Activated CD8-positive, alpha-beta T cell treated with anti-CD3 and anti-CD28 coated beads, Interleukin-2, amount 10 ng/mL, durations not matched to agents 7 days and 5 days (primary cell): ENCODE measurements at regions of chr9 and their contacts with region 1.

Region 1: DNA sequence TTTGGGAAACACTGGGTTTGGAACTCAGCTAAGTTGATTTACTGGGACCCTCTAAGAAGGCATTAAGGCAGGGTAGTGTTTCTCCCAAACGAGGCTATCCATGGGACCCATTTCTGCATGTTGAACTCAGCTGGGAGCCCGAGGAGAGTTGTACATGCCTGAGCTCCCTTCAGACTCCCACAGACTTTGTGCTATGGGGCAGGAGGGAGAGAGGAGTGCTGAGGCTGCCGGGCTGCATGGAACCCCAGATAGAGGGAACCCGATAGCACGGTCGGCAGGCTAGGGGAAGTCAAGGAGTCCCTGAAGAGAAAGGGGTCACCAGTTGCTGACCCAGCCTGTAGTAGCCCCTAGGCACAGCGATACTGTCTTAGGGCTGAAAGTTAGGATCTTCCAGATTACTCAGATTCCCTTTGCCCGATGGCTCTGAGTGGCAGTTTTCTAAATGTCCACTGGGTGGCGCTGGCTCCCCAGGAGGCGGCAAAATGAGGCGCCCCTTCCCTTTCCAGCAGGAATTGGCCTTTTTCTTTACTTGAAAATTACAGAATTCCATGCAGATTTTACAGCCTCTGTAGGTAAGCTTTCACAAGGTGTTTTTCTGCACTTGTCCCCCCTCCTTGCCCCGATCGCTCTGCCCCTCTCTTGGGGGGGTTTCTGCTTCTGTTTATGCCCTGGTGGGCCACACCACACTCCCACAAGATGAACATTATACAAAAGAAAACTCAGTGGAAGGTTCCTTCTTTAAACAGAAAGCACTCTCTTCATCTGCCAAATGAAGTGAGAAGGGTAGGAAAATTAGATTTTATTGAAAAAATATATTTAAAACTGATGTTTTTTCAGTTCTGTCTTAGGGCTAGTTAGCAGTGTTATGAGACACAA is 17.8 kb downstream of the NANS start:
- DNase-seq: peak; percentile 73
- ATAC-seq: peak; percentile 28
- H3K4me3 Mint-ChIP-seq: no peak overlapping the region
- H3K27ac Mint-ChIP-seq: peak overlapping the region; percentile 77
- H3K4me1 Mint-ChIP-seq: peaks cover 37% of the 10 kb centered on the region
- H3K27me3 Mint-ChIP-seq: no peaks in the 10 kb centered on the region

Region 2: GRCh38 chr9:97773723-97774122 is 300.6 kb before region 1 on chr9:
- CTCF ChIA-PET with region 1: no interaction called
- POLR2A ChIA-PET with region 1: no interaction called
- DNase-seq: no peak
- ATAC-seq: no peak
- H3K4me3 Mint-ChIP-seq: no peak overlapping the region
- H3K27ac Mint-ChIP-seq: no peak overlapping the region
- H3K4me1 Mint-ChIP-seq: no peaks in the 10 kb centered on the region
- H3K27me3 Mint-ChIP-seq: peaks cover 22% of the 10 kb centered on the region

Region 3: DNA sequence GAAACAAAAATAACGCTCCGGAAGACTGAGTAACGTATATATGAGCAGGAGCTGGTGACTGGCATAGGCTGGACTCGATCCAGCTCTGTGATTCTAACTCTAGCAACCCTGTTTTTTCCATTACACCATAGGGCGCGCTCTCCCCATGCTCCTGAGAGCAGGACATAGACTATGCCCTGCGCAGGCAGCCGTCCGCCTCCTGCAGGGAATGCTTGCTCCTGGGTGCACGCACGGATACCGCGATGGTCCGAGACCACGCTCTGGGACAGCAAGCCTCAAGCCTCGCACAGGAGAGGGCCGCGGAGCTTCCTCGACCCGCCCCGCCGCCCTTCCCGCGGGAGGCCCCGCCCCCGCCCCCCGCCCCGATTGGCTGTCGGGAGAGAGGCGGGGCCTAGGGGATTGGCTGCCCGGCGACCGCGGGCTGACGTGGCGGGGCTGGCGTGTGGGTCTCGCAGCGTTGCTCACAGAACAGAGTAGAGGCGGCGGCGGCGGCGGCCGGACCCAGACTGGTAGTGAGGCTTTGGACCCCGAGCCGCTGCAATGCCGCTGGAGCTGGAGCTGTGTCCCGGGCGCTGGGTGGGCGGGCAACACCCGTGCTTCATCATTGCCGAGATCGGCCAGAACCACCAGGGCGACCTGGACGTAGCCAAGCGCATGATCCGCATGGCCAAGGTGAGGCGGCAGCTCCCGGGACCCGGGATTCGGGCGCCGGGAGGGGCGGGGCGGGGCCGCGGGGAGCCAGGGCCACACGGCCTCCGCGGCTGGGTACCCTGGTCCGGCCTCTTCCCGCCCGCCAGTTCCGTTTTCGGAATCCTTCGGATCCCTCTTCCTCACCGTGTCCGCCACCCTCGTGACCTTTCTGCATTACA is 17.9 kb before region 1 on chr9 and contains the start of gene NANS:
- CTCF ChIA-PET with region 1: interaction called, 22 read pairs
- POLR2A ChIA-PET with region 1: interaction called, 3 read pairs
- DNase-seq: peak; percentile 95
- ATAC-seq: peak; percentile 95
- H3K4me3 Mint-ChIP-seq: peak within 1 kb of the TSS; percentile 99
- H3K27ac Mint-ChIP-seq: peak within 1 kb of the TSS; percentile 99
- H3K4me1 Mint-ChIP-seq: peaks cover 39% of the 10 kb centered on the region
- H3K27me3 Mint-ChIP-seq: no peaks in the 10 kb centered on the region
- total RNA-seq, gene NANS: 45.5 to 46.6 TPM

Region 4: DNA sequence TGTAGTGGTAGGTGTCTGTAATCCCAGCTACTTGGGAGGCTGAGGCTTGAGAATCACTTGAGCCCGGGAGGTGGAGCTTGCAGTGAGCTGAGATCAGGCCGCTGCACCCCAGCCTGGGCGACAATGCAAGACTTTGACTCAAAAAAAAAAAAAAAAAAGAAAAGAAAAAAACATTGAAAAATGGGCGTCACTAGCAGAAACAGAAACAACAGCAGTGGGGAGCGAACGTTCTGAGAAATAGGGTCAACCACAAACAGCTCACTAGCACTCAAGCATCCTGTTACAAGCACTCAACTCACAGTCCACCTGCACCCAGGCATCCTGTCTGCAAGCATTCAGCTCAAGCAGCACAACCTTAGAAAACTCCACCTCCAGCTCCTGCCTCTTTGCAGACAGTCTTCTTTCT is 27.5 kb after region 1 on chr9:
- CTCF ChIA-PET with region 1: interaction called, 11 read pairs
- POLR2A ChIA-PET with region 1: interaction called, 4 read pairs
- DNase-seq: peak; percentile 93
- ATAC-seq: peak; percentile 98
- H3K4me3 Mint-ChIP-seq: peak overlapping the region; percentile 79
- H3K27ac Mint-ChIP-seq: peak overlapping the region; percentile 99
- H3K4me1 Mint-ChIP-seq: peaks cover 86% of the 10 kb centered on the region
- H3K27me3 Mint-ChIP-seq: no peaks in the 10 kb centered on the region

Region 5: GRCh38 chr9:98108531-98109031 is 34.2 kb after region 1 on chr9:
- CTCF ChIA-PET with region 1: interaction called, 14 read pairs
- POLR2A ChIA-PET with region 1: interaction called, 3 read pairs
- DNase-seq: peak; percentile 70
- ATAC-seq: peak; percentile 94
- H3K4me3 Mint-ChIP-seq: peak overlapping the region; percentile 64
- H3K27ac Mint-ChIP-seq: peak overlapping the region; percentile 95
- H3K4me1 Mint-ChIP-seq: peaks cover 82% of the 10 kb centered on the region
- H3K27me3 Mint-ChIP-seq: no peaks in the 10 kb centered on the region